ENCODE measurements at regions of chr17 and their contacts with region 1.

Region 1: DNA sequence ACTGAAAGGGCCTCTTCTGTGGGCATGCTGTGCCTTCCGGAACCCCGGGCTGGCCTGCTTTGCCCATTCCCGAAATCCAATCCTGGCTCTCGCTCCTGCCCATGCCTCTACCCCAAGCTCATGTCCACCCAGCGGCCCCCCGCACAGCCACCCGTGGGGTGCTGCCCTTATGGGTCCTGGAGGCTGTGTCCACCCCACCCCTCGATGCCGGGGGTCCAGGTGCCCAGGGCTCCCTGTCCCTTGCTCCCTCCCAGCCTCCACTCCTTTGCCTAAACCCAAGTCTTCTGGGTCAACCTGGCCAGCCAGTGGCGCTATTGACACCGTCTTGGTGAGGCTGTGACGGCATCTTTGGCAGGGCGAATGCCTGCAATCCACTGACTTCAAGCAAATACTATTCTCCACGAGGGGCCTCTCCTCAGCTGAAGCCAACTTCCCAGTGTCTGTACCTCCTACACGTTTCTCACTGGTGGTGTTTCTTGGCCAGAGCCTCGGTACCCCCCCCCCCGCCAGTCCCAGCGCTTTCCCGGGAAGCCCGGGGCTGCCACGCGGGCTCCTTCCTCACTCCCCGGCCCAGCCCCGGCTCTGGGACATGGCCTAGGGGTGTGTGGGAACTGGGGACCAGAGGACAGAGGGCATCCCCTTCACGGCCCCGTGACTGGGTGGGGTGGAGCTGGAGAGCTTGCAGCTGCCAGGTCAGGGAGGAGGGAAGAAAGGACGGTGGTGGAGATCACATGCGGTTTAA is 12.2 kb upstream of the DUS1L start:
- DNase-seq: no peak
- ATAC-seq: peak; percentile 82

Region 2: GRCh38 chr17:82120148-82120547 is 42.4 kb after region 1 on chr17:
- intact Hi-C with region 1: loop called (anchors 1 kb)
- DNase-seq: no peak
- ATAC-seq: no peak

Region 3: GRCh38 chr17:82603981-82604448 is 526.2 kb after region 1 on chr17:
- intact Hi-C with region 1: no loop called
- DNase-seq: peak; percentile 77
- ATAC-seq: peak; percentile 93

Measured in sciatic nerve (tissue), 2 donors.